ENCODE measurements at regions of chr3 and their contacts with region 1.

Region 1: GRCh38 chr3:23834082-23834870 is 28.5 kb downstream of the UBE2E1 start:
- DNase-seq: no peak
- CTCF ChIP-seq: peak; percentile 36

Region 2: DNA sequence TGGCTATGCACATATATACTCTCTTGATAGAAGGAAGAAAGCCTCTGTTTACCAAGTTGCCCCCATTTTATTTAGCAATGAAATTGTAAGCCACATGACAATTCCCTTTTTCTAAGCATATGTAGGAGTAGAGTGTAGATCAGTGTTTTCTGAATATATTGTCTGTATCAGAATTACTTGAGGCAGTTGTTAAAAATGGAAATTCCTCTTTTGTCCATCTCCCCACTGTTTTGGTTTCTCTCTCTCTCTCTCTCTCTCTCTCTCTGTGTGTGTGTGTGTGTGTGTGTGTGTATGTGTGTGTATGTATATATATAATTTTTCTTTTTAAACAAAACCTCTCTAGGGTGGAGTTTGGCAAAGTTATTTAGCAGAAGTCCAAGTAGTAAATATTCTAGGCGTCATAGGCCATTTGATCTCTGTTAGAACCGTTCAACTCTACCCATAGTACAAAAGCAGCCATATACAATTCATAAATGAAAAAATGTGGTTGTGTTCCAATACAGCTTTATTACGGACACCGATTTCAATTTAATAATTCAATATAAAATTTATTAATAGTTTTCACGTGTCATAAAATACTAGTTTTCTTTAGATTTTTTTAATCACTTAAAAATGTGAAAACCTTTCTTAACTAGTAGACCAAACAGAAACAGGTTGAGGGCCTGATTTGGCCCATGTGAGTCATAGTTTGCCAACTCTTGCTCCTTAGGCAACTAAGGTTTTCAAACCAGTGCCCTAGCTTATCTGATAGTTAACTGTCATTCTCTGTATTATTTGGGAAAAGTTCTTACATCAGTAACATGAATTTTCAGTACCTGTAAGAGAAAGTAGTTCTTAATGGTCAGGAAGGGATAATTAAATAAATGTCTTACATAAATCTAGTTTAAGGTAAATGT is 11.3 kb after region 1 on chr3:
- CTCF ChIA-PET with region 1: interaction called, 19 read pairs
- POLR2A ChIA-PET with region 1: no interaction called
- DNase-seq: no peak
- CTCF ChIP-seq: no peak

Region 3: GRCh38 chr3:23859016-23859743 is 24.9 kb after region 1 on chr3:
- CTCF ChIA-PET with region 1: interaction called, 21 read pairs
- POLR2A ChIA-PET with region 1: no interaction called
- DNase-seq: no peak
- CTCF ChIP-seq: no peak

Region 4: DNA sequence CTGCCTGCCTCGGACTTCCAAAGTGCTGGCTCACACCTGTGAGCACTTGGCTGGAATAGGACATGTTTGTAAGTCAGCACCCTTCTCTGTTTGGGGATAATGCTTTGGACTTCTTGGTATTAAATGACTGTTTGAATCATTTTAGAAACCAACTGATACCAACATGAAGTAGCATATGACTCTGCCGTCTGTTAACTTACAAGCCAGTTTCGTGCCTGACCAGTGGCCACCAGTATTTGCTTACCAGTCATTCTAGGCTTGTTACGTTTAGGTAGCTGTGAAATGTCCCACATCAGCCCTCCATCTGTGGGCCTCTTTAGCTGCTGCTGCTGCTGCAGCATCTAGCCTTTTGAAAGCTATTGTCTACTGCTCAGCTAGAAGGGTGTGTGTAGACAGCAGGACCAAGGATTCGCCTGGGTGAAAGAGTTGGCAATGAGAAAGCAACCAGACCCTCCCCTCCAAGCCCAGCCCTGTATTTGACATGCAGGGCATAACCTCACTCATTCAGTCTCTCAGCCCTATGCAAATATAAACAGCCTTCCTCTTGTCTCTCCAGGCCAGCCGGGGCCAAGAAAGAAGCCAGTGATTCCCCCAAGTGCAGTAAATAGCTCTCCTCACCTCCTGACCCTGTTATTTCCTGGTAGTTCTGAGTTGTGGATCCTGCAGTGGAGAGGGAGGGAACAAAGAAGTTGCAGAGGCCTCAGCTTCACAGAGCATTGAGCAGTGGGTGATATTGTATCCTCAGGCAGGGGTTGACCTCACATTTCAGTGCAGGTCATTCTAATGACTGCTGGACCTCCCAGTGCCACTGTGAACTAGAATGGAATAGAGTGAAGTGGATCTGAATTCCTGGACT is 31.5 kb after region 1 on chr3:
- CTCF ChIA-PET with region 1: interaction called, 21 read pairs
- POLR2A ChIA-PET with region 1: interaction called, 5 read pairs
- DNase-seq: peak; percentile 48
- CTCF ChIP-seq: no peak

Region 5: DNA sequence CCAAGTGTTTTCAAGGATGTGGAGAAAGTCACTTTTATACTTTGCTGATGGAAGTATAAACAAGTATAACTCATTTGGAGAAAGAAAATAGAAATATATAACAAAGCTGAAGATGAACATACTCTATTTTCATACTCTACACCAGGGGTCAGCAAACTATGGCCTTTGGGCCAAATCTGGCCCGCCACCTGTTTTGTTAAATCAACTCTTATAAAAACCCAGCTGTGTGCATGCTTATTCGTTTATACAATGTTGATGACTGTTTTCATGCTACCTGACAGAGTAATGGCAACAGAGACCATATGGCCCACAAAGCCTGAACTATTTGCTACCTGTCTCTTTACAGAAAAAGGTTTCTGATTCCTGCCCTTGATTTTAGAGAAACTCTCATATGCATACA is 234.8 kb after region 1 on chr3:
- CTCF ChIA-PET with region 1: no interaction called
- POLR2A ChIA-PET with region 1: no interaction called
- DNase-seq: no peak
- CTCF ChIP-seq: no peak